GM10248 (cell line): ENCODE measurements at regions of chr1 and their contacts with region 1.

Region 1: GRCh38 chr1:235843461-235843961 is 23.2 kb downstream of the LYST start:
- DNase-seq: peak; percentile 34
- CTCF ChIP-seq: peak; percentile 73

Region 2: GRCh38 chr1:235504496-235505222 is 338.9 kb before region 1 on chr1:
- CTCF ChIA-PET with region 1: interaction called, 12 read pairs
- POLR2A ChIA-PET with region 1: no interaction called
- DNase-seq: peak; percentile 97
- CTCF ChIP-seq: peak; percentile 66

Region 3: DNA sequence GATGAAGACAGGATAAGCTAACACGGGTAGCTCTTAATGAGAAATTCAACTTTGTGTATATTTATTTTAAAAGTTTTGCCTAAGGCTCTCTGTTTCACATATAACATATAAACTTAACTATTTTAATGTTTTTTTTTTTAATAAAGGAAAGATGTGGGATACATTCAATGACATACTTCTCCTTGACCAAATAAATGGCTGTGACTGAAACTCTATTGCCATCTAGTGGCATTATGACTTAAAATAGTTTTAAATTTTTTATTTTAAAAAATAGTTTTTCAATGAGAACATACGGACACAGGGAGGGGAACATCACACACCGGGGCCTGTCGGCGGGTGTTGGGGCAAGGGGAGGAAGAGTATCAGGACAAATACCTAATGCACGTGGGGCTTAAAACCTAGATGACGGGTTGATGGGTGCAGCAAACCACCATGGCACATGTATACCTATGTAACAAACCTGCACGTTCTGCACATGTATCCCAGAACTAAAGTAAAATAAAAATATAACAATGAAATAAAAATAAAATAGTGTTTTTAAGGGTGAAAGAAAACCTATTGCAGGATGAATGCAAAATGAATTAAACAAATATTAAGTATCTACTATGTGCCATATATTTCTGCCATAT is 60.2 kb before region 1 on chr1:
- CTCF ChIA-PET with region 1: interaction called, 13 read pairs
- POLR2A ChIA-PET with region 1: no interaction called
- DNase-seq: no peak
- CTCF ChIP-seq: no peak

Region 4: GRCh38 chr1:235821361-235821981 is 22.0 kb before region 1 on chr1:
- CTCF ChIA-PET with region 1: interaction called, 27 read pairs
- POLR2A ChIA-PET with region 1: no interaction called
- DNase-seq: no peak
- CTCF ChIP-seq: no peak

Region 5: DNA sequence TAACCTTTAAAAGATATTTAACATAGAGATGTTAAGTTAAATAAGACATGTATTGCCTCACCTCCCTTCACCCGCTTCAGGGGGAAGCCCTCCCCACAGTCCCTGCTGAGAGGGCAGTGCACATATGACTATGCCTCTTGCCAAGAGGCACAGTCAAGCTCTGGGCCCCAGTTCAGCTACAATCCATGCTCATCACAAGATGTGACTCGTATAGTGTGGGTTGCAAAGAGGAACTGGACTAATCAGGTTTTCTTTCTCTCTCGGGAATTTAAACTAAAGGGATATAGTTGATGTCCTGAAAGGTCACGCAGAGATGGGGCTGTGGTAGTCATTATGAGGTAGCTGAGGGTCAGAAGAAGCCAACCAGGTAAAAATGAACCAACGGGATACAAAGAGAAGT is 12.4 kb before region 1 on chr1:
- CTCF ChIA-PET with region 1: interaction called, 95 read pairs
- POLR2A ChIA-PET with region 1: no interaction called
- DNase-seq: peak; percentile 36
- CTCF ChIP-seq: no peak

Region 6: DNA sequence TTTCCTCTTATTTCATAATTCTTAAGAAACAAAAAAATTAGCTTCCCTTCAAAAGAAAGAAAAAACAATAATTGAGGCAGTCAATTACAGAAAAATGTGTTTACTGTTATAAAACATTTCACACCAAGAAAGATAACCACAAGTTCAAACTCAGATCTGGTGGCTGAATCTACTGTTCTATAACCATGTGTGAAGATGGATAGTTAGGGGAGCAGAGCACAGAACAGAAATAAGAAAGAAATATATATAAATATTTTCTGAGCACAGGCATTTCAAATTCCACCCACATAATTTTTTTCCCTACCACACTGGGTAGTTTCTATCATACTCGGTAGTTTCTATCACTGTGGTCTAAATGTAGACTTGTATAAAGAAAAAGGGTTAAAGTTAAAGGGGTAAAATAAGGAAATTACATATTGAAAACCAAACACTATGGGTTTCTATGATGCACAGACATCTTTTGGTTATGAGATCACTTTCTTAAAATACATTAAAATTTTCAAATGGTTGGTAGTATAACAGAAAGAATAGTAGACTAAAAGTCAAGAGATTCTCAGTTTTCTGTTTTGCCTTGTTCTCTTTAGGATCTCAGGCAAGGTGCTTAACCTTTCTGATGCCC is 12.4 kb after region 1 on chr1:
- CTCF ChIA-PET with region 1: interaction called, 36 read pairs
- POLR2A ChIA-PET with region 1: no interaction called
- DNase-seq: peak; percentile 23
- CTCF ChIP-seq: no peak